ENCODE measurements at regions of chr17 and their contacts with region 1.

Region 1: GRCh38 chr17:16521070-16521727 is 29.2 kb upstream of the LRRC75A start:
- DNase-seq: peak; percentile 71
- H3K4me3 ChIP-seq: no peak overlapping the region
- H3K27ac ChIP-seq: no peak overlapping the region
- H3K4me1 ChIP-seq: peaks cover 20% of the 10 kb centered on the region
- H3K27me3 ChIP-seq: no peaks in the 10 kb centered on the region
- CTCF ChIP-seq: peak; percentile 90 to 93

Region 2: GRCh38 chr17:16037636-16038035 is 483.6 kb before region 1 on chr17:
- CTCF ChIA-PET with region 1: no interaction called
- dilution Hi-C with region 1: no loop called
- in situ Hi-C with region 1: no loop called
- intact Hi-C with region 1: loop called (anchors 5 kb)
- DNase-seq: no peak
- H3K4me3 ChIP-seq: no peak overlapping the region
- H3K27ac ChIP-seq: no peak overlapping the region
- H3K4me1 ChIP-seq: no peaks in the 10 kb centered on the region
- H3K27me3 ChIP-seq: no peaks in the 10 kb centered on the region
- CTCF ChIP-seq: no peak

Region 3: DNA sequence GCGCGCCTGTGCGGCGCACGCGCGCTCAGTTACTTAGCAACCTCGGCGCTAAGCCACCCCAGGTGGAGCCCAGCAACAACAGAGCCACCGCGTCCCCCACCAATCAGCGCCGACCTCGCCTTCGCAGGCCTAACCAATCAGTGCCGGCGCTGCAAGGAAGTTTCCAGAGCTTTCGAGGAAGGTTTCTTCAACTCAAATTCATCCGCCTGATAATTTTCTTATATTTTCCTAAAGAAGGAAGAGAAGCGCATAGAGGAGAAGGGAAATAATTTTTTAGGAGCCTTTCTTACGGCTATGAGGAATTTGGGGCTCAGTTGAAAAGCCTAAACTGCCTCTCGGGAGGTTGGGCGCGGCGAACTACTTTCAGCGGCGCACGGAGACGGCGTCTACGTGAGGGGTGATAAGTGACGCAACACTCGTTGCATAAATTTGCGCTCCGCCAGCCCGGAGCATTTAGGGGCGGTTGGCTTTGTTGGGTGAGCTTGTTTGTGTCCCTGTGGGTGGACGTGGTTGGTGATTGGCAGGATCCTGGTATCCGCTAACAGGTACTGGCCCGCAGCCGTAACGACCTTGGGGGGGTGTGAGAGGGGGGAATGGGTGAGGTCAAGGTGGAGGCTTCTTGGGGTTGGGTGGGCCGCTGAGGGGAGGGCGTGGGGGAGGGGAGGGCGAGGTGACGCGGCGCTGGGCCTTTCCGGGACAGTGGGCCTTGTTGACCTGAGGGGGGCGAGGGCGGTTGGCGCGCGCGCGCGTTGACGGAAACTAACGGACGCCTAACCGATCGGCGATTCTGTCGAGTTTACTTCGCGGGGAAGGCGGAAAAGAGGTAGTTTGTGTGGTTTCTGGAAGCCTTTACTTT is 140.3 kb before region 1 on chr17 and contains the start of gene UBB:
- CTCF ChIA-PET with region 1: no interaction called
- dilution Hi-C with region 1: no loop called
- in situ Hi-C with region 1: loop called in 1 of 2 experiments (anchors 25 kb)
- intact Hi-C with region 1: loop called (anchors 1 kb)
- DNase-seq: peak; percentile 97
- H3K4me3 ChIP-seq: peak within 1 kb of the TSS; percentile 64 to 78 (median 68)
- H3K27ac ChIP-seq: peak within 1 kb of the TSS; percentile 95
- H3K4me1 ChIP-seq: peaks cover 26% of the 10 kb centered on the region
- H3K27me3 ChIP-seq: no peaks in the 10 kb centered on the region
- CTCF ChIP-seq: no peak
- total RNA-seq, gene UBB: 633 to 696 TPM

Region 4: GRCh38 chr17:16463358-16464302 is 57.6 kb before region 1 on chr17:
- CTCF ChIA-PET with region 1: no interaction called
- dilution Hi-C with region 1: no loop called
- in situ Hi-C with region 1: loop called in 1 of 2 experiments (anchors 5 kb)
- intact Hi-C with region 1: loop called (anchors 2 kb)
- DNase-seq: peak; percentile 35
- H3K4me3 ChIP-seq: no peak overlapping the region
- H3K27ac ChIP-seq: no peak overlapping the region
- H3K4me1 ChIP-seq: peaks cover 21% of the 10 kb centered on the region
- H3K27me3 ChIP-seq: no peaks in the 10 kb centered on the region
- CTCF ChIP-seq: peak; percentile 41 to 60

Region 5: GRCh38 chr17:16506188-16506587 is 15.0 kb before region 1 on chr17:
- CTCF ChIA-PET with region 1: no interaction called
- dilution Hi-C with region 1: no loop called
- in situ Hi-C with region 1: no loop called
- intact Hi-C with region 1: loop called (anchors 2 kb)
- DNase-seq: no peak
- H3K4me3 ChIP-seq: no peak overlapping the region
- H3K27ac ChIP-seq: no peak overlapping the region
- H3K4me1 ChIP-seq: no peaks in the 10 kb centered on the region
- H3K27me3 ChIP-seq: no peaks in the 10 kb centered on the region
- CTCF ChIP-seq: peak in 1 of 2 donors; percentile 13

Region 6: GRCh38 chr17:16599537-16599936 is 78.3 kb after region 1 on chr17:
- CTCF ChIA-PET with region 1: no interaction called
- dilution Hi-C with region 1: no loop called
- in situ Hi-C with region 1: no loop called
- intact Hi-C with region 1: no loop called
- DNase-seq: no peak
- H3K4me3 ChIP-seq: no peak overlapping the region
- H3K27ac ChIP-seq: no peak overlapping the region
- H3K4me1 ChIP-seq: no peaks in the 10 kb centered on the region
- H3K27me3 ChIP-seq: no peaks in the 10 kb centered on the region
- CTCF ChIP-seq: no peak